ENCODE measurements at regions of chr12 and their contacts with region 1.

Region 1: DNA sequence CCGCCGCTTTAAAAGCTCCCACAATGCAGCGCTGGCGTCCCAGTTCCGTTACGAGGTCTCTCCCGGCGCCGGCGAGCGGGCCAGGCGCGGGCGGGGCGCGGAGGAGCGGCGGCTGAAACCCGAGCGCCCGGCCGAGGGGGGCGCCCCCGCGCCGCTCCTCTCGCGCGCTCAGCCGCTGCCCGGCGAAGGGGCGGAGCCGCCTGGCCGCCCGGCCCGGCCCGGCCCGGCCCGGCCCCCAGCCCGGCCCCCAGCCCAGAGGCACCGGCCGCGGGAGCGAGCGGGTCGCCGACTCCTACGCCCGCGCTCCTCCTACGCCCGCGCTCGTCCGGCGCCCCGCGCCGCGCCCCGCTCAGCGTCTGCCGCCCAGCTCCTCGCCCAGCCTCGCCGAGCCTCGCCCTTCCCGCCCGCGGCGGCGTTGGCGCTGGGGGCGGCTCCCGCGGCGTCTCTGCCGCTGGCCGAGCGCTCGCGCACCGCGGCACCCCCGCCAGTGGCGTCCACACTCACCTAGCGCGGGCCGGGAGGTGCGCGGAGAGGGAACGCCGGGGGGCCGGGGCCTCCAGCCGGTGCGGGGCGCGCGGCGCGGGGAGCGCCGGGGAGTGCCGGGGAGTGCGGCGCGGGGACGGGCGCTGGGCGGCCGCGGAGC is at the start of gene RASSF8:
- DNase-seq: peak; percentile 23
- H3K4me3 Mint-ChIP-seq: peak within 1 kb of the TSS; percentile 78
- H3K27ac Mint-ChIP-seq: no peak within 1 kb of the TSS
- H3K4me1 Mint-ChIP-seq: peaks cover 11% of the 10 kb centered on the region
- H3K27me3 Mint-ChIP-seq: peaks cover 58% of the 10 kb centered on the region
- total RNA-seq, gene RASSF8: 0.32 to 0.81 TPM

Region 2: DNA sequence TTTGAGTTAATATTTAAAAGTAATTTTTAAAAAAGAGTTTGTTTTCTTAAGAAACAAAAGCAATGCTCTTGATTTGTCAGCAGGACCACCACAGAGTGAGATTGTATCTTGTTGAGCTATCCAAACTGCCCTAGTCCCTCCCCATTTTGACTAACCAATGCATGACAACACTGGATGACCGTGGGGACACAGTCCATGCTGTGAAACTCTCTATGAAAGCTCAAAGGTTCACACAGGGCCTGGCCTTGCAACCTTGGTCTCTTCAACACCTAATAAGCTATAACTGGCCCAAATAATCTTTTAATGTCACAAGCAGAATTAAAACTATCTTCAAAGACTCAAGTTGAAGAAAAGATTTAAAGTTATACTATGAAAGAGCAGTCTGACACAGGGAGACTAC is 750.0 kb before region 1 on chr12:
- CTCF ChIA-PET with region 1: no interaction called
- intact Hi-C with region 1: loop called (anchors 10 kb)
- DNase-seq: no peak
- H3K4me3 Mint-ChIP-seq: no peak overlapping the region
- H3K27ac Mint-ChIP-seq: peak overlapping the region; percentile 46
- H3K4me1 Mint-ChIP-seq: peaks cover 11% of the 10 kb centered on the region
- H3K27me3 Mint-ChIP-seq: no peaks in the 10 kb centered on the region

Region 3: DNA sequence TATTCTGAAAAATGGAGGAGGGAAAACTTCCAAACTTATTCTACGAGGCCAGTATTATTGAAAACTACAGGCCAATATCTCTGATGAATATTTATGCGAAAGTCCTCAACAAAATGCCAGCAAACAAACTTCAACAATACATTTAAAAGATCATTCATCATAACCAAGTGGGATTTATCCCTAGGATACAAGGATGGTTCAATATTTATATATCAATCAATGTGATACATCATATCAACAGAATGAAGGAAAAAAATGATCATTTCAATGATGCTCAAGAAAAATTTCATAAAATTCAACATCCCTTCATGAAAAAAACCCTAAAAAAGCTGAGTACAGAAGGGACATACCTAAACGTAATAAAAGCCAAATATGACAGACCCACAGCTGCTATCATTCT is 359.6 kb before region 1 on chr12:
- CTCF ChIA-PET with region 1: no interaction called
- intact Hi-C with region 1: loop called (anchors 5 kb)
- DNase-seq: no peak
- H3K4me3 Mint-ChIP-seq: no peak overlapping the region
- H3K27ac Mint-ChIP-seq: no peak overlapping the region
- H3K4me1 Mint-ChIP-seq: peaks cover 27% of the 10 kb centered on the region
- H3K27me3 Mint-ChIP-seq: no peaks in the 10 kb centered on the region

Region 4: DNA sequence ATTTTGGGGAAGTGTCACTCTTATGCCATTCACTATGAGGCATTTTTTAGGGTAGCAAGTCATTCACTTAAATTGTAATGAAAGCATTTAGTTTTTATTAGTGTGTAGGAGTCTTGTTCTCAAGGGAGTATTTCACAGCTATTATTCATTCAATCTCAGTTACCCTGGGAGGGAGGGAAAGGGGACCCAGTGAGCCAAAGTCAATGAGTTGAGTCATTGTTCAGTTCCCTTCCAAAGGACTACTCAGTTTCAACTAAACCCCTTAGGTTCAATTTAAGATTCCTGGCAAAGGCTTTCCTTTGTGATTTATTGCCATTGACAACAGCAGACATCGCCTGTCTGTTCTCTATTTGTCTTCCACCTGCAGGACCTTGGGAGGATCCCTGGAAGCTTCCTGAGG is 29.4 kb before region 1 on chr12:
- CTCF ChIA-PET with region 1: no interaction called
- intact Hi-C with region 1: no loop called
- DNase-seq: no peak
- H3K4me3 Mint-ChIP-seq: no peak overlapping the region
- H3K27ac Mint-ChIP-seq: no peak overlapping the region
- H3K4me1 Mint-ChIP-seq: no peaks in the 10 kb centered on the region
- H3K27me3 Mint-ChIP-seq: no peaks in the 10 kb centered on the region

Measured in activated naive CD4-positive, alpha-beta T cell treated with anti-CD3 and anti-CD28 coated beads for 36 hours (primary cell).